ENCODE measurements at regions of chr12 and their contacts with region 1.

Region 1: GRCh38 chr12:50084775-50085614 is at the start of gene SMARCD1:
- DNase-seq: peak; percentile 98
- H3K4me3 ChIP-seq: peak within 1 kb of the TSS; percentile 76
- H3K27ac ChIP-seq: peak within 1 kb of the TSS; percentile 90
- H3K4me1 ChIP-seq: peaks cover 5% of the 10 kb centered on the region
- H3K27me3 ChIP-seq: no peaks in the 10 kb centered on the region
- CTCF ChIP-seq: peak; percentile 91
- total RNA-seq, gene SMARCD1: 141 and 152 TPM in 2 replicates

Region 2: GRCh38 chr12:49855005-49855404 is 230.0 kb before region 1 on chr12:
- CTCF ChIA-PET with region 1: interaction called, 10 read pairs
- POLR2A ChIA-PET with region 1: no interaction called
- intact Hi-C with region 1: no loop called
- DNase-seq: no peak
- H3K4me3 ChIP-seq: no peak overlapping the region
- H3K27ac ChIP-seq: no peak overlapping the region
- H3K4me1 ChIP-seq: no peaks in the 10 kb centered on the region
- H3K27me3 ChIP-seq: no peaks in the 10 kb centered on the region
- CTCF ChIP-seq: no peak

Region 3: GRCh38 chr12:50101663-50102062 is 16.7 kb after region 1 on chr12:
- CTCF ChIA-PET with region 1: interaction called, 15 read pairs
- POLR2A ChIA-PET with region 1: interaction called, 5 read pairs
- intact Hi-C with region 1: no loop called
- DNase-seq: peak; percentile 73
- H3K4me3 ChIP-seq: no peak overlapping the region
- H3K27ac ChIP-seq: no peak overlapping the region
- H3K4me1 ChIP-seq: peaks cover 8% of the 10 kb centered on the region
- H3K27me3 ChIP-seq: no peaks in the 10 kb centered on the region
- CTCF ChIP-seq: peak; percentile 60

Region 4: GRCh38 chr12:50111693-50112455 is 26.9 kb after region 1 on chr12 and contains the start of gene COX14:
- CTCF ChIA-PET with region 1: interaction called, 19 read pairs
- POLR2A ChIA-PET with region 1: interaction called, 11 read pairs
- intact Hi-C with region 1: no loop called
- DNase-seq: peak; percentile 100
- H3K4me3 ChIP-seq: peak within 1 kb of the TSS; percentile 74
- H3K27ac ChIP-seq: peak within 1 kb of the TSS; percentile 89
- H3K4me1 ChIP-seq: peaks cover 26% of the 10 kb centered on the region
- H3K27me3 ChIP-seq: no peaks in the 10 kb centered on the region
- CTCF ChIP-seq: peak; percentile 99
- total RNA-seq, gene COX14: 25.4 and 28.7 TPM in 2 replicates

Region 5: GRCh38 chr12:50167041-50167828 is 82.2 kb after region 1 on chr12 and contains the start of gene CERS5:
- CTCF ChIA-PET with region 1: no interaction called
- POLR2A ChIA-PET with region 1: no interaction called
- intact Hi-C with region 1: loop called (anchors 2 kb)
- DNase-seq: peak; percentile 100
- H3K4me3 ChIP-seq: peak within 1 kb of the TSS; percentile 70
- H3K27ac ChIP-seq: peak within 1 kb of the TSS; percentile 91
- H3K4me1 ChIP-seq: no peaks in the 10 kb centered on the region
- H3K27me3 ChIP-seq: no peaks in the 10 kb centered on the region
- CTCF ChIP-seq: no peak
- total RNA-seq, gene CERS5: 57.0 and 63.7 TPM in 2 replicates

Region 6: GRCh38 chr12:50220363-50220995 is 135.5 kb after region 1 on chr12:
- CTCF ChIA-PET with region 1: no interaction called
- POLR2A ChIA-PET with region 1: no interaction called
- intact Hi-C with region 1: no loop called
- DNase-seq: peak; percentile 40
- H3K4me3 ChIP-seq: peak overlapping the region; percentile 58
- H3K27ac ChIP-seq: peak overlapping the region; percentile 91
- H3K4me1 ChIP-seq: peaks cover 21% of the 10 kb centered on the region
- H3K27me3 ChIP-seq: no peaks in the 10 kb centered on the region
- CTCF ChIP-seq: no peak

Region 7: GRCh38 chr12:50251619-50252255 is 166.7 kb after region 1 on chr12:
- CTCF ChIA-PET with region 1: no interaction called
- POLR2A ChIA-PET with region 1: no interaction called
- intact Hi-C with region 1: no loop called
- DNase-seq: no peak
- H3K4me3 ChIP-seq: no peak overlapping the region
- H3K27ac ChIP-seq: no peak overlapping the region
- H3K4me1 ChIP-seq: no peaks in the 10 kb centered on the region
- H3K27me3 ChIP-seq: no peaks in the 10 kb centered on the region
- CTCF ChIP-seq: no peak

Region 8: GRCh38 chr12:50308593-50308992 is 223.6 kb after region 1 on chr12:
- CTCF ChIA-PET with region 1: no interaction called
- POLR2A ChIA-PET with region 1: interaction called, 19 read pairs
- intact Hi-C with region 1: no loop called
- DNase-seq: no peak
- H3K4me3 ChIP-seq: no peak overlapping the region
- H3K27ac ChIP-seq: no peak overlapping the region
- H3K4me1 ChIP-seq: no peaks in the 10 kb centered on the region
- H3K27me3 ChIP-seq: no peaks in the 10 kb centered on the region
- CTCF ChIP-seq: no peak

Region 9: DNA sequence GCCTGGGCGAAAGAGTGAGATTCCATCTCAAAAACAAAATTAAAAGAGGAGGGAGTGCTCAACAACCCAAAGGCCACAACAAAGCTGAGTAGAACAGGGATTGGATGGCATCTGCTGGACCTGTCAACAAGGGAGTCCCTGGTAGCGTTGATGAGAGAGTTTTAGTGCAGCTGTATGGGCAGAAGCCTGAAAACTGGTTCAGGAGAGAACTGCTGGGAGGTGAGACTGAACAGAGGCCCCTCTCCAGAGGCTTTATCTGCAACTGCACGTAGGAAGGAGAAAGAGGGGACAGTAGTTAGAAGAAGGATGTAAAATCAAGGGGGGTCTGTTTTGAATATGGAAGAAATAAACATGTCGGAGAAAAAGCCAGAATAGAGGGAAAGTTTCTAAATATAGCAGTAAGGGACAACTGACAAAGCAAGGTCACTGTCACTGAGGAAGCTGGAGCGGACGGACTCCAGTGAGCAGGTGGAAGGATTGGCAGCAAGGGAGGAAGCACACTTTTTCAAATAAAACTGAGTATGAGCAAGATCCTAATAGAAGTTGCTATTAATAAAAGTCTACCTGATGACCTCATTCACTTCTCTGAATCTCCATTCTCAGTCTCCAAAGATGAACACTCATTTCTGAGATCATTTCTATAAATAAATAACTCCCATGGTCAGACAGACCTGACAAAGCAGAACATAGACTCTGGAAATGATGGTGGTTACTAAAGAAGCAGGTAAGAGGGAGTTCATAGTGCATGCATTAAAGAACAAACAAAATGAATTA is 667.1 kb after region 1 on chr12:
- CTCF ChIA-PET with region 1: no interaction called
- POLR2A ChIA-PET with region 1: interaction called, 17 read pairs
- intact Hi-C with region 1: no loop called
- DNase-seq: no peak
- H3K4me3 ChIP-seq: no peak overlapping the region
- H3K27ac ChIP-seq: no peak overlapping the region
- H3K4me1 ChIP-seq: no peaks in the 10 kb centered on the region
- H3K27me3 ChIP-seq: no peaks in the 10 kb centered on the region
- CTCF ChIP-seq: no peak